H1 (cell line): ENCODE measurements at regions of chr11 and their contacts with region 1.

Region 1: DNA sequence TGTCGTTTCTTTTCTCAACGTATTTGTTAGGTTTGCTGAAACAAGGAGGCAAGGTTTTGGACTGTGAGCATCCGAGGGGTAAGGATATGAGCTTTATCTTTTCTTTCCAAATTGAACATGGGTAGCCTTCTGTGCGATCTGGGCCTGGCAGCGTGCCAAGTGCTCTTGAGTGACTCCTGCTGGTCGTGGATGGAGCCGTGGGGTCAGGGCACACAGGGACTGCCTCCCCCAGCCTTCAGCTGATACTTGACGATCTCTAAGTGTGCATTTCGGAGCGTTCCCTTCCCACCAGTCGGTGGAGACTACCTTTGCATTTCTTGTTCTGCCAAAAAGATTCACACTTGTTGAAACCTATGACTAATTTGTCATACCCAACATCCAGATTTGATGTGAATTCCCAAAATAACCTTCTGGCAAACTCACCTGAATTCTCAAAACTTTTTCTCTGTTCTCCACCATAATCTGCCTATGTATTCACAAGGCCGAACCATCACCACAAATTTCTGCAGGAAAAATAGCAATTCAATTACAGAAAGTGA is 40.1 kb upstream of the CLMP start:
- DNase-seq: peak in 1 of 2 experiments; percentile 89
- H3K4me3 ChIP-seq: no peak overlapping the region
- H3K27ac ChIP-seq: no peak overlapping the region
- H3K4me1 ChIP-seq: no peaks in the 10 kb centered on the region
- H3K27me3 ChIP-seq: no peaks in the 10 kb centered on the region
- CTCF ChIP-seq: peak; percentile 79 to 96 (median 92)
- EP300 ChIP-seq: no peak
- POLR2A ChIP-seq: no peak
- RAD21 ChIP-seq: peak; percentile 58 to 74

Region 2: DNA sequence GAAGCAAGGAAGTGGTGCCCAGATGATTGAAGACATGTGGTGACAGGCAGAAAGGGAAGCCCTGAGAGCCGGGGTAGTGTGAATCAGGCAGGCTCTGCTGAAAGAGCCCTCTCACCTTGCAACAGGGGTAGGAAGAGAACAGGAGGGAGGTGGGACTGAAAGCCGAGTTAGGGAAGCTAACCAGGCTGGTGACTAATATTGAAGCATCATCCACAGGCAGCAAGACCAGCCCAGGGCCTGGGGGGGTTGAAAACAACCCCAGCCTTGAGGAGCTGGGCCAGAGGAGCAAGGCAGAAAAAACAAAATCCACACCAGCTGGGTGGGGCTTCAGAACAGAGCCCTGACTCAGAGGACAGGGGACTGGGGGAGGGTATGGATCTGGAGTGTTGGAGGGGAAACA is 431.9 kb before region 1 on chr11:
- CTCF ChIA-PET with region 1: no interaction called
- POLR2A ChIA-PET with region 1: no interaction called
- DNase-seq: no peak
- H3K4me3 ChIP-seq: no peak overlapping the region
- H3K27ac ChIP-seq: no peak overlapping the region
- H3K4me1 ChIP-seq: peaks cover 0 to 3% (median 0%) of the 10 kb centered on the region in 4 experiments; a peak in 4 of 7 replicates
- H3K27me3 ChIP-seq: no peaks in the 10 kb centered on the region
- CTCF ChIP-seq: no peak
- EP300 ChIP-seq: no peak
- POLR2A ChIP-seq: no peak
- RAD21 ChIP-seq: no peak

Region 3: GRCh38 chr11:123219066-123219690 is 16.0 kb before region 1 on chr11:
- CTCF ChIA-PET with region 1: interaction called, 13 read pairs
- POLR2A ChIA-PET with region 1: no interaction called
- DNase-seq: no peak
- H3K4me3 ChIP-seq: no peak overlapping the region
- H3K27ac ChIP-seq: no peak overlapping the region
- H3K4me1 ChIP-seq: peaks cover 0 to 8% (median 6%) of the 10 kb centered on the region in 4 experiments; a peak in 4 of 7 replicates
- H3K27me3 ChIP-seq: peaks cover 0 to 1% (median 0%) of the 10 kb centered on the region in 4 experiments; a peak in 1 of 7 replicates
- CTCF ChIP-seq: no peak
- EP300 ChIP-seq: no peak
- POLR2A ChIP-seq: no peak
- RAD21 ChIP-seq: no peak

Region 4: DNA sequence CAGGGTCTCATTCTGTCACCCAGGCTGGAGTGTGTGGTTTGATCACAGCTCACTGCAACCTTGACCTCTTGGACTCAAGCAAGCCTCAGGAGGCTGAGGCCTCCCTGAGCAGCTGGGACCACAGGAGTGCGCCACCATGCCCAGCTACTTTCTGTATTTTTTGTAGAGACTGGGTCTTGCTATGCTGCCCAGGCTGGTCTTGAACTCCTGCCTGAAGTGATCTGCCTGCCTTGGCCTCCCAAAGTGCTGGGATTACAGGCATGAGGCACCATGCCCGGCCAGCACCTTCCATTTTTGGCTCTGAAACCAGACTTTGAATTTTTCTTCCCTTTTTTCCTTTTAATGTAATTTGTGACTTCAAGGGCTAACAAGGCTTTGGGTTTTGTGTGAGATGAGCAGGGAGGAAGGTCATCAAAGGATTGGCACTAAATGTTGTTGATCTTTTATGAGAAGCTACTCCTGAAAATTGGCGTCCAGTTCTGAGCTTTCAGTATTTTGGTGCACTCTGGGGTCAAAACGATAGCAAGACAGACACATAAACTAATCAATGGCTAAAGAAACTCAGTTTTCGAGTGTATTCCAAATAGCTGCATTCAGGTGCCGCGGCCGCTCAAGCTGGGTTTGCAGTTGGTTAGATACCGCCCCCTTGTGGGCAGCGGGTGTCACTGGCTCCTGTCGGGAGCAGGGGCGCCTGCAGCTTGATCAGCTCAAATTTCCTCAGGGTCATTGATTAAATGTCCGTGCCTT is 11.7 kb after region 1 on chr11:
- CTCF ChIA-PET with region 1: interaction called, 92 read pairs
- POLR2A ChIA-PET with region 1: no interaction called
- DNase-seq: peak; percentile 61 to 92
- H3K4me3 ChIP-seq: no peak overlapping the region
- H3K27ac ChIP-seq: no peak overlapping the region
- H3K4me1 ChIP-seq: peaks cover 0 to 5% (median under 1%) of the 10 kb centered on the region in 4 experiments; a peak in 2 of 7 replicates
- H3K27me3 ChIP-seq: no peaks in the 10 kb centered on the region
- CTCF ChIP-seq: peak; percentile 94 to 98 (median 95)
- EP300 ChIP-seq: no peak
- POLR2A ChIP-seq: no peak
- RAD21 ChIP-seq: peak; percentile 99

Region 5: GRCh38 chr11:123351375-123351774 is 116.2 kb after region 1 on chr11:
- CTCF ChIA-PET with region 1: no interaction called
- POLR2A ChIA-PET with region 1: no interaction called
- DNase-seq: peak in 1 of 2 experiments; percentile 61
- H3K4me3 ChIP-seq: no peak overlapping the region
- H3K27ac ChIP-seq: no peak overlapping the region
- H3K4me1 ChIP-seq: peaks cover 0 to 10% (median 1%) of the 10 kb centered on the region in 4 experiments; a peak in 3 of 7 replicates
- H3K27me3 ChIP-seq: peaks cover 0 to 4% (median 1%) of the 10 kb centered on the region in 4 experiments; a peak in 3 of 7 replicates
- CTCF ChIP-seq: peak in 1 of 3 experiments; percentile 4; a peak in 1 of 4 replicates
- EP300 ChIP-seq: no peak
- POLR2A ChIP-seq: no peak
- RAD21 ChIP-seq: no peak